Posterior cingulate gyrus (tissue), 11 donors: ENCODE measurements at regions of chr22 and their contacts with region 1.

Region 1: DNA sequence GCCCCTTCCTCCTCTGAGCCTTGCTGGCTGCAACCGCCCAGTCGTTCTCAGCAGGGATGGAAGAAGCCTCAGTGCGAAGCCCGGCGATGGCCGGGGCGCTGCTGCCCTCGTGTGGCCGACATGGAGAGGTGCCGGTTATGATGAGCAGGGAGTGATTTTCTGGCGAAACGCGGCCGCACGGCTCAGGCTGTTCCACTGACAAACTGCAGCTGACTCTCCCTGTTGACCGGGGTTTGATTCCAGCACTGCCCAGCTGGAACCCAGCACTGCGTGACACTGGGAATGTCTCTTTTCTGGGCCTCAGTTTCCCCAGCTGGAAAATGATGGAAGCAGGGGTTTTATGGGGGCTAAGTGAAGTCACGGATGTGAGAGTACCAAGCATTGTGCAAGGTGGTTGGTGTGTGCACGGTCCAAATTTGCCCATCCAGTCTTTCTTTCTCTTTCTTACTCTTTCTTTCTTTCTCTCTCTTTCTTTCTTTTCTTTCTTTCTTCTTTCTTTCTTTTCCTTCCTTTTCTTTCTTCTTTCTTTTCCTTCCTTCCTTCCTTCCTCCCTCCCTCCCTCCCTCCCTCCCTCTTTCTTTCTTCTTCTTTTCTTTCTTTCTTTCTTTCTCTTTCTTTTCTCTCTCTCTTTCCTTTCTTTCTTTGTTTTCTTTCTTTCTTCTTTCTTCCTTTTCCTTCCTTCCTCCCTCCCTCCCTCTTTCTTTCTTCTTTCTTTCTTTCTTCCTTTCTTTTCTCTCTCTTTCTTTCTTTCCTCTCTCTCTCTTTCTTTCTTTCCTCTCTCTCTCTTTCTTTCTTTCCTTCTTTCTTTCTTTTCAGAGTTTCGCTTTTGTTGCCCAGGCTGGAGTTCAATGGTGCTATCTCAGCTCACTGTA is 25.8 kb upstream of the MPPED1 start:
- DNase-seq: peak; percentile 66 to 98 (median 83)

Region 2: GRCh38 chr22:43230971-43231723 is 154.9 kb before region 1 on chr22:
- intact Hi-C with region 1: loop called (anchors 1 kb)
- DNase-seq: peak in 9 of 10 donors; percentile 33 to 93 (median 62)

Region 3: DNA sequence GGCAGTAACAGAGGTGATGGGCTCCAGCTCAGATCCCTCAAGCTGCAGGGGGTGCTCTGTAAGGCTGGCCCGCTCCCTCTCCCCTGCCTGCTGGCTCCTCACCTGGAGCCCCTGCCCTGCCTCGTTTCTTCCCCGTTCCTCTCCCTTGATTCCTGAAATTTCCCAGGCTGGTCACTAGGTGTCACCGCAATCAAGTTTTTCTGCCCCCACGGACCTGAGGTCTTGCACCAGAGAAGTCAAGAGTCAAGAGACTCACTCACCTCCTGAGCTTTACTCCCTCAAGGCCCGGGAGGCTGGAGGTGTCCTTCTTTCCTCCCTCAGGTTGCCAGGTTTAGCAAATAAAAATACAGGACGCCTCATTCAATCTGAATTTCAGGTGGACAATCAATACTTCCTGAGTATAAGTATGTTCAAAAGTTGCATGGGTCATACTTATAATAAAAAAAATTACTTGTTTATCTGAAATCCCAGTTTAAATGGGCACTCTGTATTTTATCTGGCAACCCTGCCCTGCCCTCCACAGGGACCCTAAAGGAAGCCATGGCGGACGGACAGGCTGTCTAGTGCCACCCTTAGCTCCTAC is 112.0 kb before region 1 on chr22:
- intact Hi-C with region 1: loop called (anchors 1 kb)
- DNase-seq: peak in 4 of 10 donors; percentile 27 to 48 (median 36)

Region 4: DNA sequence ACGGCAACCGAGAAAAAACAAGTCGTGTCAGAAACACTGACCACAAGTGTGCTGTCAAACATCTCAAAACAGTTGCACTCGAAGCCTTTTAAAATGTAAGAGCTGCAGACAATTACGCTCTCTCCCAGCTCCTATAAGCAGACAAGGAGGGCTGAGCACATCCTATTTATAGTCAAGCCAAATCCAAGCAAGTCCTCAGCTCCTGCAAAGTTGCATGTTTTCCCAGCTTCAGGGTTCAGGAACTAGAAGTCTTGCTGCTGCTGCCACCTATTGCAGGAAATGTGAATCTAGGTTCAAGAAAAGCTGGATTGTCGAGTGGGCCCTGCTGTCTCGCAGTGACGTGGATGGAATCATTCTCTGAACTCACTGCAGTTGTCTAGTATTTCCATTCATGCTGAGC is 410.6 kb after region 1 on chr22:
- intact Hi-C with region 1: loop called (anchors 1 kb)
- DNase-seq: peak in 7 of 10 donors; percentile 23 to 84 (median 54)

Region 5: GRCh38 chr22:43826142-43827002 is 440.4 kb after region 1 on chr22:
- intact Hi-C with region 1: loop called (anchors 1 kb)
- DNase-seq: peak in 7 of 10 donors; percentile 43 to 92 (median 63)